Gastrocnemius medialis (tissue), 4 donors: ENCODE measurements at regions of chr2 and their contacts with region 1.

Region 1: GRCh38 chr2:100984892-100985379 is 17.2 kb upstream of the RPL31 start:
- DNase-seq: peak; percentile 53 to 65
- ATAC-seq: peak; percentile 57 to 75
- H3K4me3 ChIP-seq: no peak overlapping the region
- H3K27ac ChIP-seq: no peak overlapping the region
- H3K4me1 ChIP-seq: no peaks in the 10 kb centered on the region
- H3K27me3 ChIP-seq: no peaks in the 10 kb centered on the region
- CTCF ChIP-seq: peak; percentile 82 to 91 (median 88)
- POLR2A ChIP-seq: no peak

Region 2: GRCh38 chr2:100718065-100718629 is 266.8 kb before region 1 on chr2:
- in situ Hi-C with region 1: loop called in 1 of 4 experiments (anchors 10 kb)
- intact Hi-C with region 1: no loop called
- DNase-seq: no peak
- ATAC-seq: no peak
- H3K4me3 ChIP-seq: no peak overlapping the region
- H3K27ac ChIP-seq: no peak overlapping the region
- H3K4me1 ChIP-seq: no peaks in the 10 kb centered on the region
- H3K27me3 ChIP-seq: no peaks in the 10 kb centered on the region
- CTCF ChIP-seq: no peak
- POLR2A ChIP-seq: no peak

Region 3: GRCh38 chr2:100730346-100730745 is 254.6 kb before region 1 on chr2:
- in situ Hi-C with region 1: loop called in 2 of 4 experiments (anchors 5 to 10 kb)
- intact Hi-C with region 1: loop called (anchors 1 kb)
- DNase-seq: peak; percentile 14 to 48
- ATAC-seq: peak; percentile 57 to 66
- H3K4me3 ChIP-seq: no peak overlapping the region
- H3K27ac ChIP-seq: no peak overlapping the region
- H3K4me1 ChIP-seq: peaks cover 0 to 3% of the 10 kb centered on the region in 2 donors
- H3K27me3 ChIP-seq: no peaks in the 10 kb centered on the region
- CTCF ChIP-seq: peak; percentile 36 to 62 (median 55)
- POLR2A ChIP-seq: no peak